ENCODE measurements at regions of chr11 and their contacts with region 1.

Region 1: DNA sequence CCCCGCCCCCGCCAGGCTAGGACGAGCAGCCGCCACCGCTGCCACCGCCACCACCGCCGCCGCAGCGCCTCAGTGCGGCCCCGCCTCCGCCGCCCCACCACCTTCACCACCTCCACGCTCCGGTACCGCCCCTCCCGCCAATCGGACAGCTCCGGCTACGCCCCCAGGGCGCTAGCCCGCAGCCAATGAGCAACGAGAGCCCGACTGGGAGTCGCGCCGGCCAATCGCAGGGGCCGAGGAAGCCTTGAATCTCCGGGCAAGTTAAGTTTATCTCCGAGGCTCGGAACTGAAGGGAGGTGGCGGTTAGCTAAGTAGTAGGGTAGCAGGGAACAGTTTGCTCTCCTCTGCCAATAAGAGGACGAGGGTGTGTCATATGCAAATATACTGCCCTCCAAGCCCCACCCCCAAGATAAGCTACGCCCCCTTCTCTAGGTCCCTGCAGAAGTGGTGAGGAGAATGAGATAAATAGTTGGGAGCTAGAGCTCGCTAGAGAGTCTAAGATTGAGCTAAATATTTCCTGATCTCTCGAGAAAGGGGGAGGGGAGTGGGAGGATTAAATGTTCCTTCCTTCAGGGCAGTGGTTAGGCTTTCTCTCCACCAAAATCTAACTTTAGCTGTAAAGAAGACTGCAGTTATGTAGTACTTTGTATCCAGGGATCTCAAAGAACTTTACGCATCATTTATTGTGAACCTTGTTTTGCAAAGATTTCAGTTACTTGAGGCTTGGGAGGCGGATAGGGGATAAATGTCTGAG is at the start of gene SESN3:
- DNase-seq: peak; percentile 97
- ATAC-seq: peak; percentile 96
- H3K4me3 Mint-ChIP-seq: no peak within 1 kb of the TSS
- H3K27ac Mint-ChIP-seq: peak within 1 kb of the TSS; percentile 84
- H3K4me1 Mint-ChIP-seq: peaks cover 26% of the 10 kb centered on the region
- H3K27me3 Mint-ChIP-seq: peaks cover 3% of the 10 kb centered on the region
- total RNA-seq, gene SESN3: 45.4 to 48.8 TPM

Region 2: GRCh38 chr11:95150946-95151684 is 80.2 kb before region 1 on chr11:
- POLR2A ChIA-PET with region 1: interaction called, 17 read pairs
- DNase-seq: peak; percentile 88
- ATAC-seq: peak; percentile 93
- H3K4me3 Mint-ChIP-seq: peak overlapping the region; percentile 89
- H3K27ac Mint-ChIP-seq: peak overlapping the region; percentile 89
- H3K4me1 Mint-ChIP-seq: peaks cover 34% of the 10 kb centered on the region
- H3K27me3 Mint-ChIP-seq: peaks cover 6% of the 10 kb centered on the region

Region 3: DNA sequence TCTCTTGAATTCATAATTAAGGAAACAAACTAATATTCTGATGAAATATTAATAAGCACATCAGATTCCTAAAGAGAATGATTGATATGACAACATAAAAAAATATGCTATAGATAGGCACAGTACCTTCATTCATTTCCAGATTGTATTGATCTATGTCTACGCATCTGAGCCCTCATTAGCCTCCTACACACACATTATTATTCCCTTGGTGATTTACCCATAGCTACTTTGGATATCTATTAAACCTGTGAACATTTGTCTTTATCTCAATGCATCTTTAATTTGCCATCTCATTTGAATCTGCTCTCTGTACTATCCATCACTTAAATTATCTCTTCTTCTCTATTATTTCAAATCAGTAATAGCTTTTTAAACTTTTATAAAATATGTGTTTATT is 18.7 kb before region 1 on chr11:
- POLR2A ChIA-PET with region 1: no interaction called
- DNase-seq: no peak
- ATAC-seq: no peak
- H3K4me3 Mint-ChIP-seq: no peak overlapping the region
- H3K27ac Mint-ChIP-seq: no peak overlapping the region
- H3K4me1 Mint-ChIP-seq: no peaks in the 10 kb centered on the region
- H3K27me3 Mint-ChIP-seq: no peaks in the 10 kb centered on the region

Region 4: GRCh38 chr11:95254131-95254704 is 22.9 kb after region 1 on chr11:
- POLR2A ChIA-PET with region 1: interaction called, 59 read pairs
- DNase-seq: peak; percentile 56
- ATAC-seq: peak; percentile 100
- H3K4me3 Mint-ChIP-seq: peak overlapping the region; percentile 89
- H3K27ac Mint-ChIP-seq: peak overlapping the region; percentile 88
- H3K4me1 Mint-ChIP-seq: peaks cover 35% of the 10 kb centered on the region
- H3K27me3 Mint-ChIP-seq: no peaks in the 10 kb centered on the region

Region 5: GRCh38 chr11:95699631-95700470 is 468.5 kb after region 1 on chr11:
- POLR2A ChIA-PET with region 1: interaction called, 27 read pairs
- DNase-seq: no peak
- ATAC-seq: peak; percentile 62
- H3K4me3 Mint-ChIP-seq: peak overlapping the region; percentile 81
- H3K27ac Mint-ChIP-seq: peak overlapping the region; percentile 91
- H3K4me1 Mint-ChIP-seq: peaks cover 48% of the 10 kb centered on the region
- H3K27me3 Mint-ChIP-seq: no peaks in the 10 kb centered on the region

Region 6: DNA sequence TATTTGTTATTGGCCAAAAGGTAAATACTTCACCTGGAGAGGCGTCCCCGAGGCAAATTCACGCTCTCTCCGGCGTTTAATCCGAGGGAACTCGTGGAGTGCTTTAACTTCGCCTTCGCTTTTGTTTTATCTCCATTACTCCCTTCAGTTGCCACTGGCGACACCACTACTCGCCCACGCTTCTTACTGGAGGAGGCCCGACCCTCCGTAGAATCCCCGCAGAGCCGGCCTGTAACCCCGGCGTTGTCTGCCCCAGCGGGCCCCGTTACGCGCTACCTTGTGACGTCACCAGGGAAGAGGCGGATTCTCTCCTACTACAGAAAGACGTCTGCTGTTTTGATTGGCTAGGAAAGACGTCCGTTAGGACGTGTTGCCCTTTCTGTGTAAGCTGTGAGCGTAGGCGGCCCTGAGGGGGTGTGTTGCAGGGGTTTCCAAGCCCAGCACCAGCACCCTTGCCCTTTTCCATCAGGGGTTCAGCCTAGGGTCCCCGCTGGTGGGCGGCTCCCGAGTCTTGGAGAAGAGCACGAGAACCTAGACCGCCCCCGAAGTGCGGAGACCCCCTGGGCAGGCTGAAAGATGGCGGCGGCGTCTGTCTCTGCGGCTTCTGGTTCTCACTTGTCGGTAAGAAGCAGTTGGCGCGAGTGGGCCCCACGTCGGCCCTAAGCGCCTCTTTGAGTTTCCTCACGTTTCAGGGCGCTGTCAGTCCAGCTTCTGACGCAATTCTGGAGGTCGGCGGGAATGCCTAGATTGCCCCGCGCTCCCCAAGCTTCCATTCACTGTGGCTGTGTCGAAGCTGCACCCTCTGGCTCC is 559.0 kb after region 1 on chr11 and contains the start of gene CEP57:
- POLR2A ChIA-PET with region 1: interaction called, 20 read pairs
- DNase-seq: peak; percentile 89
- ATAC-seq: peak; percentile 64
- H3K4me3 Mint-ChIP-seq: peak within 1 kb of the TSS; percentile 95
- H3K27ac Mint-ChIP-seq: peak within 1 kb of the TSS; percentile 100
- H3K4me1 Mint-ChIP-seq: peaks cover 44% of the 10 kb centered on the region
- H3K27me3 Mint-ChIP-seq: no peaks in the 10 kb centered on the region
- total RNA-seq, gene CEP57: 101 to 106 TPM